ENCODE measurements at regions of chr5 and their contacts with region 1.

Region 1: GRCh38 chr5:56200856-56201666 is 32.1 kb downstream of the ANKRD55 start:
- DNase-seq: peak; percentile 93
- H3K4me3 ChIP-seq: no peak overlapping the region
- H3K27ac ChIP-seq: peak overlapping the region; percentile 10
- H3K4me1 ChIP-seq: peaks cover 17% of the 10 kb centered on the region
- H3K27me3 ChIP-seq: no peaks in the 10 kb centered on the region
- CTCF ChIP-seq: peak; percentile 69 to 80
- POLR2A ChIP-seq: no peak

Region 2: GRCh38 chr5:55344392-55344992 is 856.6 kb before region 1 on chr5:
- CTCF ChIA-PET with region 1: no interaction called
- POLR2A ChIA-PET with region 1: no interaction called
- dilution Hi-C with region 1: no loop called
- intact Hi-C with region 1: loop called (anchors 1 kb)
- DNase-seq: peak; percentile 86
- H3K4me3 ChIP-seq: no peak overlapping the region
- H3K27ac ChIP-seq: no peak overlapping the region
- H3K4me1 ChIP-seq: peaks cover 3% of the 10 kb centered on the region
- H3K27me3 ChIP-seq: no peaks in the 10 kb centered on the region
- CTCF ChIP-seq: peak; percentile 57 to 66
- POLR2A ChIP-seq: no peak

Region 3: GRCh38 chr5:55936100-55936693 is 264.9 kb before region 1 on chr5:
- CTCF ChIA-PET with region 1: interaction called, 115 read pairs
- POLR2A ChIA-PET with region 1: no interaction called
- dilution Hi-C with region 1: no loop called
- intact Hi-C with region 1: loop called (anchors 1 kb)
- DNase-seq: peak; percentile 88
- H3K4me3 ChIP-seq: no peak overlapping the region
- H3K27ac ChIP-seq: no peak overlapping the region
- H3K4me1 ChIP-seq: no peaks in the 10 kb centered on the region
- H3K27me3 ChIP-seq: no peaks in the 10 kb centered on the region
- CTCF ChIP-seq: peak; percentile 82 to 94
- POLR2A ChIP-seq: no peak

Region 4: GRCh38 chr5:55982957-55983381 is 218.1 kb before region 1 on chr5:
- CTCF ChIA-PET with region 1: interaction called, 23 read pairs
- POLR2A ChIA-PET with region 1: no interaction called
- dilution Hi-C with region 1: no loop called
- intact Hi-C with region 1: loop called (anchors 1 kb)
- DNase-seq: no peak
- H3K4me3 ChIP-seq: no peak overlapping the region
- H3K27ac ChIP-seq: no peak overlapping the region
- H3K4me1 ChIP-seq: peaks cover 3% of the 10 kb centered on the region
- H3K27me3 ChIP-seq: no peaks in the 10 kb centered on the region
- CTCF ChIP-seq: peak in 1 of 2 donors; percentile 12
- POLR2A ChIP-seq: no peak

Region 5: DNA sequence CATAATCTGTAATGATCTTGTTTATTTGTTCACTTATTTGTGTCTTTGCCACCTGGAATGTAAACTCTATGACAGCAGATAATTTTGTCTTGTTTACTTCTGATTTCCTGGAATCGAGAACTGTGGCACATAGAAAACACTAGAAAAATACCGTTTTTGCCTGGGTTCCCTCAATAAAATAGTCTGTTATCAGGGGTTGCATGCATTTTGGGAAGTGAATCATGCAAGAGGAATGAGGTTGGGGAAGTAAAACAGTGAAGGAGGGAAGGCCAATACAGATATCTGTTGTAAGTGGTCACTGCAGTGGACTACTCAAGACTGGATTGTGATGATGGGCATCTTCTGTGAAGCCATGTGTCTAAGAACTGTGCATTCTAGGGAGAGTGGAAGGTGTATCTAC is 161.1 kb before region 1 on chr5:
- CTCF ChIA-PET with region 1: no interaction called
- POLR2A ChIA-PET with region 1: no interaction called
- dilution Hi-C with region 1: no loop called
- intact Hi-C with region 1: loop called (anchors 2 kb)
- DNase-seq: peak; percentile 72
- H3K4me3 ChIP-seq: no peak overlapping the region
- H3K27ac ChIP-seq: peak overlapping the region; percentile 83
- H3K4me1 ChIP-seq: peaks cover 23% of the 10 kb centered on the region
- H3K27me3 ChIP-seq: no peaks in the 10 kb centered on the region
- CTCF ChIP-seq: no peak
- POLR2A ChIP-seq: no peak

Region 6: GRCh38 chr5:56247592-56247991 is 46.5 kb after region 1 on chr5:
- CTCF ChIA-PET with region 1: no interaction called
- POLR2A ChIA-PET with region 1: no interaction called
- dilution Hi-C with region 1: no loop called
- intact Hi-C with region 1: no loop called
- DNase-seq: peak; percentile 49
- H3K4me3 ChIP-seq: no peak overlapping the region
- H3K27ac ChIP-seq: no peak overlapping the region
- H3K4me1 ChIP-seq: no peaks in the 10 kb centered on the region
- H3K27me3 ChIP-seq: no peaks in the 10 kb centered on the region
- CTCF ChIP-seq: no peak
- POLR2A ChIP-seq: no peak

Region 7: DNA sequence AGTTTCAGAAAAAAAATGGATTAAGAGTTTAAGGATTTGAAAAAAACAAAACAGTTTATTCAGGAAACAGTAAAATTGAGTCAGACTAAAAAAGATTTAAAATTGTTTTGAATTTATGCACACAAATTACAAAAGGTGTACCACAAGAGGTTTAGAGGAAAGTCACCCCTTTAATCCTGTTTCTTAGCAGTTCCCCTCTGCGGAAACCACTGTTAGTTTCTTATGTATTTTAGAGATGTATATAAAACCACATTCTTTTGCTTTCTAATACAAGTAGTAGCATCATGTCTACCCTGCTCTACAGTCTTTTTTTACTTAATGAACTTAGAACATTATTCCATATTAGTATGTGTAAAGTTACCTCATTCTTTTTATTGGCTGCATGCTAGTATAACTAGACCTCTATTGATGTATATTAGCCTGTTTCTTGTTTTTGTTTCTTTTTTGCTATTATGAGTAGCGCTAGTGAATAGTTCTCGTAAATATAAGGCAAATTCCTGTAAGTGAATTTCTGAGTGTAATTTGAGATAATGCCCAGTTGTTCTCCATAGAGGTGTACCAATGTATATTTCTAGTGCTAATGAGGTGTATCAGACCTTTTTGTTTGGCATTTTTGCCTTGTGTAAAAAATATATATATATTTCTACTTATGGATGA is 992.8 kb after region 1 on chr5:
- CTCF ChIA-PET with region 1: no interaction called
- POLR2A ChIA-PET with region 1: no interaction called
- dilution Hi-C with region 1: no loop called
- intact Hi-C with region 1: no loop called
- DNase-seq: no peak
- H3K4me3 ChIP-seq: no peak overlapping the region
- H3K27ac ChIP-seq: no peak overlapping the region
- H3K4me1 ChIP-seq: no peaks in the 10 kb centered on the region
- H3K27me3 ChIP-seq: no peaks in the 10 kb centered on the region
- CTCF ChIP-seq: no peak
- POLR2A ChIP-seq: no peak